WTC11 (cell line): ENCODE measurements at regions of chr22 and their contacts with region 1.

Region 1: DNA sequence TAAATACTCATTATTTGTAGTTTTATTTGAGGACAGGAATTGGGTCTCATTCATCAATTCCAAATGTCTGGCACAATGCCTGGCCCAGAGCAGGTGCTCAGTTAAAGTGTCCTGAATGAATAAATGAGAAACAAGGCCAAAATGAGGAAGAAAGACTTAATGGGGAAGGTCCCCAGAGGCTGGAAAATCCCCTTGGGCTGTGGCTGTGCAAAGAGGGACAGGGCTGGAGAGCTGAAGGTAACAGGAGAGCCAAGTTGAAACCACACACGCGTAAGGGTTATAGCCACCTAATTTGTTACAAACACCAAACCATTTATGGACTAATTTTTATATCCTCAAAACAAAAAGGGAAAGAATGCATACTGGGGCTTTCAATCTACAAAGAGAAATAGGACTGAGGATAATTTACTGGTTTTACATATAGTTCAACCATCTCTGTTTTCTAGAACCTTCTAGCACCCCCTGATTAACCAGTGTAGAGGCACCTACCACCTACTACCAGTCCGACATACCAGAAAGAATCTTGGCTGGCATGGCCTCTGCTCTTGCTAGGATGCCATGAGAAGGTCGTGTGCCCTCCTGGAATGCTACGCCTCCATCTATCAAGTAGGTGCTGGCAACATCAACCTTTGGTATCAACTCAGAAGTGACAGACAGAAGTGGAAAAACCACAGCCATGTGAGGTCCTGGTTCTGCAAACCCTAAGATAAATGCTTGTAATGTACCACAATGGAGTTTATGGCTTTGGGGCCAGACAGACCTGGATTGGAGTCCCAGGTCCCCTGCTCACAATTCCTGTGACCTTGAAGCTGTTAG is 28.4 kb downstream of the MYH9 start:
- DNase-seq: no peak
- ATAC-seq: no peak
- H3K4me3 Mint-ChIP-seq: no peak overlapping the region
- H3K27ac Mint-ChIP-seq: peak overlapping the region; percentile 85
- H3K4me1 Mint-ChIP-seq: peaks cover 88% of the 10 kb centered on the region
- H3K27me3 Mint-ChIP-seq: no peaks in the 10 kb centered on the region
- CTCF ChIP-seq: no peak

Region 2: GRCh38 chr22:36331306-36331911 is 28.0 kb before region 1 on chr22:
- CTCF ChIA-PET with region 1: interaction called, 5 read pairs
- POLR2A ChIA-PET with region 1: interaction called, 19 read pairs
- DNase-seq: peak; percentile 54
- ATAC-seq: peak; percentile 32
- H3K4me3 Mint-ChIP-seq: no peak overlapping the region
- H3K27ac Mint-ChIP-seq: peak overlapping the region; percentile 100
- H3K4me1 Mint-ChIP-seq: peaks cover 81% of the 10 kb centered on the region
- H3K27me3 Mint-ChIP-seq: no peaks in the 10 kb centered on the region
- CTCF ChIP-seq: no peak

Region 3: DNA sequence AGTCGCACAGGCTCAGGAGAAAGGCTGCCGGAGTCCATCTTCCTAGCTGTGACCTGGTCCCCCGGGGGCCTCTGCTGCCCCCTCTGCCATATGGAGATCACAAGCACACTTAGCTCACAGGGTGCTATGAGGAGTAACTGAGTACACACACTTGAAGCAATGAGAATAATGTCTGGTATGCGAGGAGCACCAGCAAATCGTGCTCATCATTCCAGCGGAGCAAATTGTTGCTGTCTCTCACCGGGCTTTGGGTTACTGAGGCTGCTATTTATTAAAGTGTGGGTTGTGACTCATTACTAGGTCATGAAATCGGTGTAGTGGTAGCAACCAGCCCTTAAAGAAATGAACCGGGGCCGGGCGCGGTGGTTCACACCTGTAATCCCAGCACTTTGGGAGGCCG is 217.6 kb after region 1 on chr22:
- CTCF ChIA-PET with region 1: no interaction called
- POLR2A ChIA-PET with region 1: no interaction called
- DNase-seq: no peak
- ATAC-seq: no peak
- H3K4me3 Mint-ChIP-seq: no peak overlapping the region
- H3K27ac Mint-ChIP-seq: no peak overlapping the region
- H3K4me1 Mint-ChIP-seq: no peaks in the 10 kb centered on the region; the same call in 1 of the 2 replicates
- H3K27me3 Mint-ChIP-seq: no peaks in the 10 kb centered on the region
- CTCF ChIP-seq: no peak